K562 (cell line): ENCODE measurements at regions of chr1 and their contacts with region 1.

Region 1: GRCh38 chr1:151024540-151025146 is 11.7 kb upstream of the BNIPL start:
- DNase-seq: peak; percentile 55 to 88 (median 74)
- ATAC-seq: peak; percentile 99
- H3K4me3 ChIP-seq: no peak overlapping the region
- H3K27ac ChIP-seq: no peak overlapping the region; the same call in 2 of the 3 replicates
- H3K4me1 ChIP-seq: no peaks in the 10 kb centered on the region; a peak in 2 of 5 replicates
- H3K27me3 ChIP-seq: no peaks in the 10 kb centered on the region
- CTCF ChIP-seq: peak; percentile 90 to 92 (median 92)
- EP300 ChIP-seq: 0 out of 2 replicates have a peak, but pooled peaks have one; percentile 3
- POLR2A ChIP-seq: no peak
- RAD21 ChIP-seq: peak; percentile 81 to 88

Region 2: GRCh38 chr1:150820710-150821512 is 203.7 kb before region 1 on chr1:
- CTCF ChIA-PET with region 1: no interaction called
- POLR2A ChIA-PET with region 1: no interaction called
- in situ Hi-C with region 1: no loop called
- intact Hi-C with region 1: no loop called
- DNase-seq: no peak
- ATAC-seq: no peak
- H3K4me3 ChIP-seq: no peak overlapping the region
- H3K27ac ChIP-seq: no peak overlapping the region
- H3K4me1 ChIP-seq: no peaks in the 10 kb centered on the region; a peak in 1 of 5 replicates
- H3K27me3 ChIP-seq: no peaks in the 10 kb centered on the region
- CTCF ChIP-seq: no peak
- EP300 ChIP-seq: no peak
- POLR2A ChIP-seq: no peak
- RAD21 ChIP-seq: no peak

Region 3: GRCh38 chr1:151059078-151059907 is 34.6 kb after region 1 on chr1 and contains the start of gene CDC42SE1:
- CTCF ChIA-PET with region 1: interaction called, 3 read pairs
- POLR2A ChIA-PET with region 1: interaction called, 4 read pairs
- in situ Hi-C with region 1: no loop called
- intact Hi-C with region 1: loop called (anchors 5 kb)
- DNase-seq: peak; percentile 84 to 94 (median 88)
- ATAC-seq: peak; percentile 80
- H3K4me3 ChIP-seq: peak within 1 kb of the TSS; percentile 95
- H3K27ac ChIP-seq: peak within 1 kb of the TSS; percentile 91
- H3K4me1 ChIP-seq: peaks cover 38 to 44% of the 10 kb centered on the region in 2 experiments
- H3K27me3 ChIP-seq: no peaks in the 10 kb centered on the region
- CTCF ChIP-seq: peak; percentile 84 to 96 (median 84)
- EP300 ChIP-seq: peak; percentile 37; the same call in 1 of the 2 replicates
- POLR2A ChIP-seq: peak; percentile 91
- RAD21 ChIP-seq: peak; percentile 45 to 59
- polyA plus RNA-seq, gene CDC42SE1: 78.1 to 114 TPM

Region 4: DNA sequence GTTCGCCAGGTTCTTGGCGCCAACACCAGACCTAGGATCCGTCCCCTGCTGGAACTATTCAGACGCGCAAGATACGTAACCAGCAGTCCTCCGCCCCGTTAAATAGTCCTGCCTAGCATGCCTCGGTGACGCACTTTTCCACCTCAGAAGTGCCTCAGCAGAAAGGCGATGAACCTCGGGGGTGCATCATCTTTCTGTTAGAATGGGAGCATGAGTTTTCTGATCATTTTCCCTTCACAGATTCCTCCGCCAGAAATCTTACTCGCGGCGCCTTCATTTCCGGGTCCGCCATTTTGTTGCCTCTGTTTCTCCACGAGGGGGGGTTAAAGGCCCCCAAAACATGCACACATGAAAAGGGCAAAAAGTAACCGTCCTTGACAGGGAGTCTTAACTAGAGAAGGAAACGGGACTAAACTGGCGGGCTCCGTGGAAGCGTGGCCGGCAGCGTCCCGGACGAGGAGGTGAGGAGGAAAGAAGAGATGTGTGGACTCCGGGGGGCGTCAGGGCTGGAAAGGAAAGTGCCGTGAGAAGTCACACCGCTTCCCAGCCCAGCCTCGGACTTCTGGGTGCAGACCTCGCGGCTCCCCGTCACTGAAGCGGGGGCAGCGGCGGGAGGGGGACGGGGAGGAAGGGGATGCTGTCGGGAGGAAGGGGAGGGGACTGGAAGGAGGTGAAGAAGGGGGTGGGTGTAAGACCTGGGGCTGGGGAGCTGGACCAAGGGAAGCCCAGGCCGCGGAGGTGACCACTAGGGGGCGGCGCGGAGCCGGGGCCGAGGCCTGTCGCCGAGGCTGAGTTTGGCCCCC is 46.0 kb after region 1 on chr1 and contains the start of gene GABPB2:
- CTCF ChIA-PET with region 1: no interaction called
- POLR2A ChIA-PET with region 1: interaction called, 3 read pairs
- in situ Hi-C with region 1: no loop called
- intact Hi-C with region 1: loop called (anchors 2 kb)
- DNase-seq: peak; percentile 92 to 94 (median 93)
- ATAC-seq: peak; percentile 89
- H3K4me3 ChIP-seq: peak within 1 kb of the TSS; percentile 82
- H3K27ac ChIP-seq: peak within 1 kb of the TSS; percentile 98
- H3K4me1 ChIP-seq: peaks cover 20 to 29% of the 10 kb centered on the region in 2 experiments
- H3K27me3 ChIP-seq: no peaks in the 10 kb centered on the region
- CTCF ChIP-seq: peak; percentile 76 to 88 (median 86)
- EP300 ChIP-seq: no peak
- POLR2A ChIP-seq: peak; percentile 91
- RAD21 ChIP-seq: peak; percentile 48
- polyA plus RNA-seq, gene GABPB2: 2.2 to 3.0 TPM

Region 5: GRCh38 chr1:151459331-151460046 is 434.8 kb after region 1 on chr1 and contains the start of gene POGZ:
- CTCF ChIA-PET with region 1: no interaction called
- POLR2A ChIA-PET with region 1: no interaction called
- in situ Hi-C with region 1: no loop called
- intact Hi-C with region 1: no loop called
- DNase-seq: peak; percentile 89 to 96 (median 93)
- ATAC-seq: peak; percentile 88
- H3K4me3 ChIP-seq: peak within 1 kb of the TSS; percentile 59
- H3K27ac ChIP-seq: peak within 1 kb of the TSS; percentile 90
- H3K4me1 ChIP-seq: peaks cover 0 to 20% of the 10 kb centered on the region in 2 experiments; a peak in 4 of 5 replicates
- H3K27me3 ChIP-seq: no peaks in the 10 kb centered on the region
- CTCF ChIP-seq: no peak
- EP300 ChIP-seq: no peak
- POLR2A ChIP-seq: no peak; the same call in 1 of the 2 replicates
- RAD21 ChIP-seq: no peak
- polyA plus RNA-seq, gene POGZ: 9.4 to 13.7 TPM